ENCODE measurements at regions of chr7 and their contacts with region 1.

Region 1: DNA sequence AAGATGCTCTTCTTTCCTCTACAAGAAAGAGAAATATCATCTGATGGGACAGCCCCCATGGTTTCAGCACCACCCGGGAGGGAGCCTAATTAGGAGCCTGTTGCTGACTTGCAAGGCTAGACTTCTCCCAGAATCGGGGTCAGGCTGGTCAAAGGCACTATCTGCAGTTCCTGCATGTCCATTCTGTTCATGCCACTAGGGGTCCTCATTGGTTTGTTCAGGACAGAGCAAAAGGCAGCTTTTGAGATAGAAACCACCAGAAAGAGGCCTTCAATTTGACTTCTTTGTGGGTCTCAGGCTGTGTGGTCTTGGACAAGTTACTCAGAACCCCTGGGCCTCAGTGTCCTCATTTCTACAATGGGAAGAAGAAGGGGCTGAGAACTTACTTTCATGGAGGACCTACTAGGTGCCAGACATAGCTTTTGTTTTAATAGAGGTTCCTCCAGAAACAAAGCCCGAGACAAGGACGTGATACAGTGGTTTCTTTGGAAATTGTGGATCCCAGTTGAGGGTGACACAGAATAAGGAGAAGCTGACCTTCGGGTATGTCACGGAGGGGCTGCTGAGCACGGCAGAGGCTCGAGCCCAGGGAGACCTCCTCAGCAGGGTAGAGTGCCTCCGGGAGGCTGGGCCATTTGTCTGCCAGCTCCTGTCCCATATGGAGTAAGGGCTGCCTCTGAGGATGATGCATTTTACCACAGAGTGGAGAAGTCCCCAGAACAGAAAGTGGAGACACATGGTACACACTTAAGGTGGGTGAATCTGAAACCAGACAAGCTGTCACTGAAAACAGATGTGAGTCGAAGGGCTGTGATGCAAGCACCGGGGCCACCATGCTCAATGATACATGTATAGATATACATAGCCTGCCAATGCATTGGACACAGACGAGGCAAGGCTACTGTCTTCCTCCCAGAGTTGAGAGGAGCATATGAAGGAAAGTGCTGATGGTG is 33.1 kb upstream of the NEUROD6 start:
- DNase-seq: peak; percentile 47
- H3K4me3 ChIP-seq: no peak overlapping the region
- H3K27ac ChIP-seq: no peak overlapping the region
- H3K4me1 ChIP-seq: no peaks in the 10 kb centered on the region
- H3K27me3 ChIP-seq: peaks cover 2% of the 10 kb centered on the region
- CTCF ChIP-seq: peak; percentile 86 to 91

Region 2: GRCh38 chr7:31134246-31135188 is 239.1 kb before region 1 on chr7:
- CTCF ChIA-PET with region 1: interaction called, 6 read pairs
- dilution Hi-C with region 1: no loop called
- in situ Hi-C with region 1: no loop called
- intact Hi-C with region 1: loop called (anchors 1 kb)
- DNase-seq: peak; percentile 52
- H3K4me3 ChIP-seq: no peak overlapping the region
- H3K27ac ChIP-seq: no peak overlapping the region
- H3K4me1 ChIP-seq: no peaks in the 10 kb centered on the region
- H3K27me3 ChIP-seq: no peaks in the 10 kb centered on the region
- CTCF ChIP-seq: peak; percentile 68

Region 3: GRCh38 chr7:31192986-31193385 is 180.6 kb before region 1 on chr7:
- CTCF ChIA-PET with region 1: no interaction called
- dilution Hi-C with region 1: no loop called
- in situ Hi-C with region 1: no loop called
- intact Hi-C with region 1: loop called (anchors 1 kb)
- DNase-seq: peak; percentile 52
- H3K4me3 ChIP-seq: no peak overlapping the region
- H3K27ac ChIP-seq: no peak overlapping the region
- H3K4me1 ChIP-seq: no peaks in the 10 kb centered on the region
- H3K27me3 ChIP-seq: no peaks in the 10 kb centered on the region
- CTCF ChIP-seq: peak; percentile 83 to 93

Region 4: GRCh38 chr7:31234836-31235605 is 138.6 kb before region 1 on chr7:
- CTCF ChIA-PET with region 1: no interaction called
- dilution Hi-C with region 1: no loop called
- in situ Hi-C with region 1: no loop called
- intact Hi-C with region 1: no loop called
- DNase-seq: no peak
- H3K4me3 ChIP-seq: no peak overlapping the region
- H3K27ac ChIP-seq: no peak overlapping the region
- H3K4me1 ChIP-seq: no peaks in the 10 kb centered on the region
- H3K27me3 ChIP-seq: peaks cover 6% of the 10 kb centered on the region
- CTCF ChIP-seq: no peak

Region 5: DNA sequence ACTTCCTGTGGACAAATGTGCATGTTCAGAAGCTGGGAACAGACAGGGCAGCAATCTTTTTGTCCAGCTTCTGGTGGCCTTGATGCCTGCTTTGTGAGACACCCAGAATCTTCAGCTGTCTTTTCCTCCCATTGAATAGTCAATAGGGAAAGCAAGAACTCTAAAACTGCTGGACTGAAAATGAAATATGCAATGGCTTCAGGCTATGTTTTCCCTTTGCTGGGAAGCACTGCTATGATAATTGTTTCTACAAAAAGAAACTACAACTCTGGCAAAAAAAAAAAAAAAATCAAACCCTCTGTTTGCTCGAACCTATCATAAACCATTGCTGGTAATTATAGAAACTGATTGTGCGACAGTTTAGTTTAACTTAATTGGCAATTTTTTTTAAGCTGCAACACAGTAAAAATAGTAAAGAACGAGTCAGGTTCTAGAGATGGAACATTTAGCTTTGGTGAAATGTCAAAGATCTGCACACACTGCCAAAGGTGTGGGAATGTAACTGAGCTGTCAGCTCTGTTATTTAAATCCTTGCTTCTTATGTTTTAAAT is 46.0 kb after region 1 on chr7:
- CTCF ChIA-PET with region 1: no interaction called
- dilution Hi-C with region 1: loop called (anchors 5 kb)
- in situ Hi-C with region 1: no loop called
- intact Hi-C with region 1: no loop called
- DNase-seq: no peak
- H3K4me3 ChIP-seq: no peak overlapping the region
- H3K27ac ChIP-seq: no peak overlapping the region
- H3K4me1 ChIP-seq: no peaks in the 10 kb centered on the region
- H3K27me3 ChIP-seq: no peaks in the 10 kb centered on the region
- CTCF ChIP-seq: no peak

Region 6: GRCh38 chr7:31443457-31443856 is 69.8 kb after region 1 on chr7:
- CTCF ChIA-PET with region 1: no interaction called
- dilution Hi-C with region 1: no loop called
- in situ Hi-C with region 1: no loop called
- intact Hi-C with region 1: loop called (anchors 1 kb)
- DNase-seq: peak; percentile 46
- H3K4me3 ChIP-seq: no peak overlapping the region
- H3K27ac ChIP-seq: no peak overlapping the region
- H3K4me1 ChIP-seq: no peaks in the 10 kb centered on the region
- H3K27me3 ChIP-seq: no peaks in the 10 kb centered on the region
- CTCF ChIP-seq: peak; percentile 76 to 81

Region 7: DNA sequence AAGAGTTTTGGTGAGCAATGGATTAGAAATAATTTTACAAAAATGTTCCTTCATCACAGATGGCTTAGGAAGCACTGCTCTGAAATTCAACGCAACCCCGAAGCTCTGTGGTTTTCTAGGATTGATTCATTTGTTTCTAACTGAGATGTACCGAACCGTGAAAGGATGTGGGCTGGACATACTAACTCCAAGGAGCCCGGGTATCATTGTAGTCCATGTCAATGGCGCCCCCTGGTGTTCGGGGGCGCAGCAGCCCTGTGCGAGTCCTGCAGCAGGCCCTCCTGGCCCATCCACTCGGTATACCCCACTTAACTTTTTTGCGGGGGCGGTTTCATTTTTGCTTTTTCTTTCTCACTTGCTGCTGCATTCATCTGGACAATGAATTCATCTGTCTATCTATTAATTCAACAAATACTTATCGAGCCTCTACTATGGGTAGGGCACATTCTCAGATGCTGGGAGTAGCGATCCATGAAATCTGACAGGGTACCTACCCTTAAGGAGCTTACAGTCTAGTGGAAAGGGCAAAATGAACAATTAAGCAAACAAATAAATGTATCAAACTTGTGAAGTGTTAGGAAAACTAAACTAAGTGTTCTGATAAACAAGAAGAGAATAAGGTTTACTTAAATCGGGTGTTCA is 115.1 kb after region 1 on chr7:
- CTCF ChIA-PET with region 1: no interaction called
- dilution Hi-C with region 1: no loop called
- in situ Hi-C with region 1: no loop called
- intact Hi-C with region 1: loop called (anchors 1 kb)
- DNase-seq: peak; percentile 57
- H3K4me3 ChIP-seq: no peak overlapping the region
- H3K27ac ChIP-seq: no peak overlapping the region
- H3K4me1 ChIP-seq: peaks cover 21% of the 10 kb centered on the region
- H3K27me3 ChIP-seq: no peaks in the 10 kb centered on the region
- CTCF ChIP-seq: peak; percentile 70 to 80

Measured in mammary epithelial cell (primary cell).